ENCODE measurements at regions of chr9 and their contacts with region 1.

Region 1: GRCh38 chr9:79662537-79662956 is 90.8 kb downstream of the TLE4 start:
- DNase-seq: no peak
- ATAC-seq: peak in 3 of 8 donors; percentile 21 to 53 (median 45)
- H3K4me3 ChIP-seq: peak overlapping the region in 1 of 10 donors; percentile 12
- H3K27ac ChIP-seq: peak overlapping the region in 5 of 10 donors; percentile 3 to 43 (median 31)
- H3K4me1 ChIP-seq: peaks cover 0 to 43% (median 35%) of the 10 kb centered on the region in 9 donors
- H3K27me3 ChIP-seq: no peaks in the 10 kb centered on the region
- CTCF ChIP-seq: no peak

Region 2: DNA sequence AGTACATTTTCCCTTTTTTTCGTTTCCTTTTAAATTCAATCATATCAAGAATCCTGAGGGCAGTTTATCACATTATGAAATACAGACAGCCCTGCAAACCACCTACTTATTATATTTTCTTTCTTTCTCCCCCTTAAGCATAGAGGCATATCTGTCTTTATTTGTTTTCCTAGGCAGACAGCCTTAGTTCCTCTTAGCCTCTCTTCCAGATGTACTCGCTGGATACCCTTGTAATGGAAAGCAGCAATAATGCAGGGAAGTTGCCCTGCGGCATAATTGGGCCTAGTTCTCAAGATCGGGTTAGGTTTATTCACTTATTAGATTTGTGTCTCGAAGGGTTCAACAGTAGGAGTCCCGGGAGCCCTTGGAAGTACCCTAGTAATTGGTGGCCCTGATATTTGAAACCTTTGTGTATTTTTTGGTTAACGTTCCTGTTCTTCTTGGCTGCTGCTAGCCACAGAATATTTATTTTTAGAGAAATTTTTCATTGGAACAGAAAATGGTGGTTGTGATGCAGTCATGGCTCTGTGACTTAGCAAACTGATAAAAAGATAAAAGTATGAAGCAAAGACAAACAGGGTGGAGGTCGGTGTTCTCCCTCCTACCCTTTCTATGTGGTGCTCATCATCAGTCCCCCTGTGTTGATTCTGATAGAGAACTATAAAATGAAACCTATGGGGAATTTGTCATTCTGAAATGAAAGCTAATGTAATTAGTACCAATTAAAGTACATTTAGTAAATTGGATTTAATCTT is 84.4 kb before region 1 on chr9:
- intact Hi-C with region 1: loop called in 6 of 10 experiments (anchors 1 to 10 kb)
- DNase-seq: no peak
- ATAC-seq: peak in 5 of 8 donors; percentile 40 to 58 (median 41)
- H3K4me3 ChIP-seq: peak overlapping the region in 5 of 10 donors; percentile 4 to 23 (median 19)
- H3K27ac ChIP-seq: peak overlapping the region; percentile 2 to 75 (median 53)
- H3K4me1 ChIP-seq: peaks cover 4 to 86% (median 62%) of the 10 kb centered on the region in 9 donors
- H3K27me3 ChIP-seq: no peaks in the 10 kb centered on the region
- CTCF ChIP-seq: no peak

Region 3: DNA sequence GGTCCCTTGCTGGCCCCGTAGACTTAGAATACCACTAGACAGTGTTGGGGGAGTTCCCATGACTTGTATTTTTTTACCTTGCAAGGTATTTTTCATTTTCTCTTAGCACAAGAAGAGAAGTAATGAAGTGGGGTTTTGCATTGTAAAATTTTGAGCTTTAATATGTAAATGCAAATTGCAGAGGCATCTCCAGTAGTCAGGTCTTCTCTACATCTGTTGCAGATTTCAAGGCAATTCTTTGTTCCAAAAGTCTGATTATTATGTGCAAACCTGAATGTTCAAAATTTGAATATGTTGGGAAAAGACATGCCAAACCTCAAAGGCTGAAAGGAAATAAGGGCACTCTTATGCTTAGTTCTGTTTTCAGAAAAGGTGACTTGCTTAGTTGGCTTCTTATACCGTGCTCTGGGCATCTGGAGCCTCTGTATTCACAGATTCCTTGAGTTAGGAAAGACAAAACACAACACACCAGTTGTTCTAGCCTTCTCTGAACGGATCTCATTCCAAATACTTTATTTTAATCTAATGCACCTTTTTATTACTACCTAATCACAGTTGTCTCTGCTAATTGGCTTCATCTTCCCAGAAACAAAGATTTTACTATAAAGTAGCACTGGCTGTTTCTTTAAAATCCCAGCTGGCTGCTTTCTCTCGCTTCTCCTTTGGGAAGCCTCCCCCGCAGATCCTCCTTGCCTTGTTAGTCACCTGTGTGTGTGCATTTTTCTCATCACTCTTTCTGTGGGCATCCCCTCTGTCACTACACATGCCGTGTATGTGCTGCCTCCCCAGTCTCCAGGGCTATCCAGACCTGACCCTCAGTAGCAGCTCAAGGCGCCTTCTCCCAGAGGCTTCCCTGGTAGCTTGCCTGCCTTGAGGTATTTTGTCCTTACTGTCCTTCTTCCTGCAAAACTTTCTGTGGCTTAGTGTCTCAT is 47.5 kb after region 1 on chr9:
- intact Hi-C with region 1: loop called in 1 of 10 experiments (anchors 5 kb)
- DNase-seq: no peak
- ATAC-seq: no peak
- H3K4me3 ChIP-seq: no peak overlapping the region
- H3K27ac ChIP-seq: no peak overlapping the region
- H3K4me1 ChIP-seq: no peaks in the 10 kb centered on the region
- H3K27me3 ChIP-seq: no peaks in the 10 kb centered on the region
- CTCF ChIP-seq: no peak